AG04449 (cell line): ENCODE measurements at regions of chr15 and their contacts with region 1.

Region 1: DNA sequence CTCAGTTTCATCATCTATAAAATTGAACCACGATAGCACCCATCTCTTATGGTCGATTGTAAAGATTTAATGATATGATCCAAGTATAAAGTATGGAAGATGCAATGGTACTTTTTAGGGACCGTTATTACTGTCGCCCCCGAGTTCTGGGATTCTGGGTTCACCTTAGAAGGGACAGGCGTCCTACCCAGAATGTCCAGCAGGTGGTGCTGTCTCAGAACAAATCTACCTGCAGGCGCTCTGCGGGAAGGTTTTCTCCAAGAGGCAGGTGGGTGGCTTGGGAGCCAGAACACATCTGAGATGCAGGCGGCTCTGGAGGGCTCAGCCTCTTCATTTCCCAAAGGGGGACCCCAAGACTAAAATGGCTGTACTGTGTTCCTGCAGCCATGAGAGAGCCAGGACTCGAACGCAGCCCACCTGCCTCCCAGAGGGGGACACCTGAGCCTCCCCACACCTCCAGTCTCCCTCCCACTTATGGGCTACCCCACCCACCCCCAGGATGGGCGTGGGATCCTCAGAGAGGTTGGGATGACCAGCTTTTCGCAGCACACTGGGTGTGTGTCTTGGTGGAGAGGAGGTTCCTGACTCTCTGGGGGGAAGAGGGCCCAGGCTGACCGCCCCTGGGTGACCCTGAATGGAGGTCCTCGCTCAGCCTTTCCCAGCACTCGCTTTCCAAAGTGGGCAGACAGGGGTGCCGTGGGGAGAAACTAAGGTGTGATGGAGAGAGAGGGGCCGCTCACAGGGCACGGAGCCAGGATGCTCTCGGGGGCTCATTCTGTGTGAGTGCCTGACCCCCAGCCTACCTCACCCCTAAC is 28.1 kb upstream of the CORO2B start:
- DNase-seq: no peak
- H3K4me3 ChIP-seq: no peak overlapping the region
- CTCF ChIP-seq: peak; percentile 80

Region 2: GRCh38 chr15:68252925-68253534 is 297.7 kb before region 1 on chr15:
- CTCF ChIA-PET with region 1: interaction called, 12 read pairs
- POLR2A ChIA-PET with region 1: no interaction called
- DNase-seq: no peak
- H3K4me3 ChIP-seq: no peak overlapping the region
- CTCF ChIP-seq: peak; percentile 69

Region 3: GRCh38 chr15:68417897-68418296 is 132.8 kb before region 1 on chr15:
- CTCF ChIA-PET with region 1: interaction called, 10 read pairs
- POLR2A ChIA-PET with region 1: no interaction called
- DNase-seq: no peak
- H3K4me3 ChIP-seq: no peak overlapping the region
- CTCF ChIP-seq: no peak

Region 4: DNA sequence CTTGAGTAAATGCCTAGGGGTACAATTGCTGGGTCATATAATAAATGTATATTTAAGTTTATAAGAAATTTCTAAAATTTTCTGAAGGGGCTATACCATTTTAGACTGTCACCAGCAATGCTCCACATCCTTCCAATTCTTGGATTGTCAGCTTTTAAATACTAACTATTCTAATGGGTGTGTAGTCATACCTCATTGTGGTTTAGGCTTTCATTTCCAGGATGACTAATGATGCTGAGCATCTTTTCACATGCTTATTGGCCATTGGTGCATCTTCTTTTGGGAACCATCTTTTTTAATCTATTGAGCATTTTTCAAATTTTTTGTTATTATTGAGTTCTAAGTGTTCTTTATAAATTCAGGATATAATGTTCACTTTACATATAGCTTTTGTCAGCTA is 24.4 kb before region 1 on chr15:
- CTCF ChIA-PET with region 1: interaction called, 33 read pairs
- POLR2A ChIA-PET with region 1: no interaction called
- DNase-seq: no peak
- H3K4me3 ChIP-seq: no peak overlapping the region
- CTCF ChIP-seq: no peak

Region 5: GRCh38 chr15:68666120-68666811 is 115.6 kb after region 1 on chr15:
- CTCF ChIA-PET with region 1: interaction called, 388 read pairs
- POLR2A ChIA-PET with region 1: no interaction called
- DNase-seq: no peak
- H3K4me3 ChIP-seq: no peak overlapping the region
- CTCF ChIP-seq: no peak

Region 6: GRCh38 chr15:68885070-68885469 is 334.4 kb after region 1 on chr15:
- CTCF ChIA-PET with region 1: interaction called, 15 read pairs
- POLR2A ChIA-PET with region 1: no interaction called
- DNase-seq: peak; percentile 31
- H3K4me3 ChIP-seq: no peak overlapping the region
- CTCF ChIP-seq: no peak